ENCODE measurements at regions of chr12 and their contacts with region 1.

Region 1: DNA sequence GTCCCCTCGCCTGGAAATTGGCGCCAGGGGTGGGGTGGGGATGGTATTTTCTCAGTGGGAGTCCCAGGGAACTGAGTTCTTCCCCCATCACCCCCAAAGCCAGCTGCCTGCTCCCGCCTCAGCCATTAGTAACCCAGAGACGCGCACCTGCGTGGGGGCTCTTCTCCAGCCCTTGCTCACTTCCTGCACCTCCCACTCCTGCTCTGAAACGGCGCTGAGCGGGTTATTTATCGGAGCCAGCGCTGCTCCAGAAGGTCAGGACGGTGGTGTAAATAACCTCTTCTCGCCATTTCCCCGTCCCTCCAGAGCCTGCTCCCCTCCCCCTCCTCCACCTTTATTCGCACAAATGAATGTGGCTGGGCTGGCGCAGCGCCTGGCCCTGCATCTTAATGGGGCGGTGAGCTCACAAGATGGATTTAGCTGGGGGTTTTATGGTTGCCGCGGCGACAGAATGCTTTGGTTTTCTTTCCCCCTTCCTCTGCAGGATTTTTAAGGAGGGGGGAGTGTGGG is 12.2 kb downstream of the GPR84 start:
- DNase-seq: no peak
- ATAC-seq: no peak
- H3K4me3 Mint-ChIP-seq: no peak overlapping the region
- H3K27ac Mint-ChIP-seq: no peak overlapping the region
- H3K4me1 Mint-ChIP-seq: peaks cover 8% of the 10 kb centered on the region
- H3K27me3 Mint-ChIP-seq: no peaks in the 10 kb centered on the region

Region 2: DNA sequence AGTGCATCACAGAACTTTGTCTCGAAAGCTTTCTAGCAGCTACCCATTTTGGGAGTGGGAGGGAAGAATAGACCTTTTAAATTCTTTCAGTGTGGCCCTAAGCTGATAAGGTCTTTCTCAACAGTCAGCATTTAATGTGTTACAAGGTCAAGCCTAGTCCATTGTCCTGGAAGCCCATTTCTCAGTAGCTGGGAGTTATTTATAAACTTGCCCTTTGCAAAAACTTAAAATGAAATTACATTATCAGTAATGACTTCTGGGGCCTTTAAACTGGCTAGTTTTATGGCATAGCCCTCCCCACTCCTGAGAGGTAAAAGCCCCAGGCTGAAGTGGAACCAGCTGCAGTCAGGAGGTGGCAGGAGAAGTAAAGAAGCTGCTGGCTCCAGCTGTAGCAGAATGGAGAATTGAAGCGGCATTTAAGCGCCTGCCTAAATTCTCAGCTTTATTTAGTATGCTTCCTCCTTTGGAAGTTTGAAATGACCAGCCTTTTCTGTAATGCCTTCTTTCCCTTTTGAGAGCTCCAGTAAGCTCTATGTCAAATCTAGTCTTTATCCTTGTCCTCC is 14.7 kb before region 1 on chr12:
- CTCF ChIA-PET with region 1: interaction called, 29 read pairs
- DNase-seq: no peak
- ATAC-seq: no peak
- H3K4me3 Mint-ChIP-seq: no peak overlapping the region
- H3K27ac Mint-ChIP-seq: no peak overlapping the region
- H3K4me1 Mint-ChIP-seq: peaks cover 3% of the 10 kb centered on the region
- H3K27me3 Mint-ChIP-seq: no peaks in the 10 kb centered on the region

Region 3: GRCh38 chr12:54560374-54560858 is 208.3 kb after region 1 on chr12:
- CTCF ChIA-PET with region 1: no interaction called
- DNase-seq: peak; percentile 85
- ATAC-seq: peak; percentile 100
- H3K4me3 Mint-ChIP-seq: peak overlapping the region; percentile 65
- H3K27ac Mint-ChIP-seq: peak overlapping the region; percentile 77
- H3K4me1 Mint-ChIP-seq: peaks cover 28% of the 10 kb centered on the region
- H3K27me3 Mint-ChIP-seq: no peaks in the 10 kb centered on the region